ENCODE measurements at regions of chr13 and their contacts with region 1.

Region 1: GRCh38 chr13:83620530-83621220 is 261.6 kb downstream of the SLITRK1 start:
- DNase-seq: no peak
- CTCF ChIP-seq: no peak

Region 2: DNA sequence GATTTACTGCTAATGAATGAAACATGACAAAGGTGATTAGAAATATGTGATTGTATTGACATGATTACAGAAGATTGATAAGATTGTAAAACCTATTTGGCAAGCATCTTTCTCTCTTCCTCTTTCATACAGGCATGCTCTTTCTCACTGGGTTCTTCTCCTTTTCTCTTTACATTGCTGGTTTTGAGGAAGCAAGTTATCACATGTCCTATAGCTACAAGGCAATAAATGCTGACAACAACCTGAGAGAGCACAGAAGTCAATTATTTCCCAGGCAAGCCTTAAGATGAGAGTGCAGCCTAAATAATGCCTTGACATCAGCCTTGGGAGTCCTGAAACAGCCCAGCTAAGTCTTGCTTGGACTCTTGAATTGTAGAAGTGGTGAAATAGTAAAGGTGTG is 613.4 kb before region 1 on chr13:
- in situ Hi-C with region 1: no loop called
- DNase-seq: no peak
- CTCF ChIP-seq: no peak

Region 3: GRCh38 chr13:83086948-83087347 is 533.7 kb before region 1 on chr13:
- in situ Hi-C with region 1: no loop called
- DNase-seq: no peak
- CTCF ChIP-seq: no peak

Region 4: GRCh38 chr13:83716121-83716520 is 95.4 kb after region 1 on chr13:
- in situ Hi-C with region 1: loop called (anchors 25 kb)
- DNase-seq: no peak
- CTCF ChIP-seq: no peak

Measured in GM13976 (cell line).